Mammary epithelial cell (primary cell): ENCODE measurements at regions of chr11 and their contacts with region 1.

Region 1: DNA sequence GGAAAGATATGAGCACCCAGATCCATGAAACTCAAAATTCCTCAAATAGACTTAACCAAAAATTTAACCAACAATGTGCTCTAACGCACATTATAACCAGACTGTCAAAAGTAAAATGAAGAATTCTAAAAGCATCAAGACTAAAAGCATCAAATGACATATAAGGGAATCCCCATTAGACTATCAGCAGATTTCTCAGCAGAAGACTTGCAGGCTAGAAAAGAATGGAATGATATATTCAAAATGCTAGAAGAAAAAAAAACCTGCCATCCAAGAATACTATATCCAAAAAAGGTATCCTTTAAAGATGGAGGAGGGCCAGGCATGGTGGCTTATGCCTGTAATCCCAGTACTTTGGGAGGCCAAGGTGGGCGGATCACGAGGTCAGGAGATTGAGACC is 117.5 kb upstream of the UBASH3B start:
- DNase-seq: no peak
- H3K4me3 ChIP-seq: no peak overlapping the region
- H3K27ac ChIP-seq: no peak overlapping the region
- H3K4me1 ChIP-seq: no peaks in the 10 kb centered on the region
- H3K27me3 ChIP-seq: peaks cover 2% of the 10 kb centered on the region
- CTCF ChIP-seq: no peak

Region 2: GRCh38 chr11:121703201-121703600 is 834.9 kb before region 1 on chr11:
- CTCF ChIA-PET with region 1: no interaction called
- dilution Hi-C with region 1: loop called (anchors 10 kb)
- in situ Hi-C with region 1: no loop called
- intact Hi-C with region 1: no loop called
- DNase-seq: no peak
- H3K4me3 ChIP-seq: no peak overlapping the region
- H3K27ac ChIP-seq: no peak overlapping the region
- H3K4me1 ChIP-seq: no peaks in the 10 kb centered on the region
- H3K27me3 ChIP-seq: peaks cover 8% of the 10 kb centered on the region
- CTCF ChIP-seq: no peak